Heart right ventricle (tissue), 16 donors: ENCODE measurements at regions of chr15 and their contacts with region 1.

Region 1: DNA sequence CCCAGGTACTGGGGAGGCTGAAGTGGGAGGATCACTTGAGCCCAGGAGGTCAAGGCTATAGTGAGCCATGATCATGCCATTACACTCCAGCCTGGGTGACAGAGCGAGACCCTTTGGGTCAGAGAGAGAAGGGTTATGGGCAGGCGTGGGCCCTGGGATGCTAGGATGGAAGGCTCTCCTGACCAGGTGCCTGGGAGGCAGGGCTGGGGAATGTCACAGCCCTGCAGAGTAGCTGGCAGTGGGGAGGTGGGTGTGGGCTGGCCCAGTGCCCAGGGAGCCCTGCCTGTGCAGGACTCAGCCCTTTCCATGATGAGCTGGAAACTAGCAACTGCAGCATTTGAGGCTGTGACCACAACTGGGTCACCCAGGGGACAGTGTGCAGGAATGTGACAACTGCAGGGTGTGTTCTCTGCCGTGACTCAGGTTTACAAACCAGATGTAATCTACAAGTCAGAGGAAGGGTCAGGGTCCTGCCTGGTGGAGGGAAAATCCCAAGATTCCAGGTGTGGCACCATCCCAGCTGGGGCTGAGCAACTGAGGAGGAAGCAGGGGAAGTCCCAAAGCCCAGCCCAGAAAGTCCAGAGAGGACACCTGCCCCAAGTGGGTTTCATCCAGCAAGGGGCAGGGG is 45.4 kb downstream of the SLC28A1 start:
- DNase-seq: no peak
- ATAC-seq: no peak
- H3K4me3 ChIP-seq: no peak overlapping the region
- H3K27ac ChIP-seq: no peak overlapping the region
- H3K4me1 ChIP-seq: peaks cover 0 to 19% (median 12%) of the 10 kb centered on the region in 9 donors
- H3K27me3 ChIP-seq: no peaks in the 10 kb centered on the region
- CTCF ChIP-seq: no peak

Region 2: DNA sequence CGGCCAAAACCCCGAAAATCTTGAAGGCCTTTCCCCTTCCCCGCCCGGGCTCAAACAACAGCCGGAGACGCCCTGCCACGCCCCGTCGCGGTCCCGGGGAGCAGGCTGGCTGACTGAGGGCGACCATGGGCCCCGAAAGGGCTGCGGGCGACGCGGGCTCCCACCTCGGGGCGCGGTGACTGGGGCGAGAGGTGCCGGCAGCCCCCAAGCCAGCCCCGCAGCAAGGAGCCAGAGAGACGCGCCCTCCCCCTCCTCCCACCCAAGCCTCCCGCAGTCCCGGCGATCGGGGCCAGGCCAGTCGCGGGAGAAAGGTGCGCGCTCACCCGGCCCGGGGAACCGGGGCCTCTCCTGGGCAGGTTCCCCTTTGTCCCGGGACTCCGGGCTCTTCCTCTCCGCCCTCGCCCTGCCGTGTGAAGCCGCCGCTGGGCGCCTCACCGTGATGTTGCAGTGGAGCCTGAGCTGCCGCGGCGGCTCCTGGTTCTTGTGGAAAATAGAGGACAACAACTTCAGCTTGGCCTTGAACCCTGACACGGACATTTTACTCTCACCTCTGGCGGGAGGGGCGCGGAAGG is 359.6 kb before region 1 on chr15:
- intact Hi-C with region 1: loop called in 1 of 10 experiments (anchors 10 kb)
- DNase-seq: peak; percentile 42 to 70
- ATAC-seq: peak; percentile 66 to 85 (median 78)
- H3K4me3 ChIP-seq: peak overlapping the region; percentile 63 to 95 (median 84)
- H3K27ac ChIP-seq: peak overlapping the region; percentile 88 to 97 (median 94)
- H3K4me1 ChIP-seq: peaks cover 0 to 18% (median 8%) of the 10 kb centered on the region in 9 donors
- H3K27me3 ChIP-seq: no peaks in the 10 kb centered on the region
- CTCF ChIP-seq: no peak

Region 3: DNA sequence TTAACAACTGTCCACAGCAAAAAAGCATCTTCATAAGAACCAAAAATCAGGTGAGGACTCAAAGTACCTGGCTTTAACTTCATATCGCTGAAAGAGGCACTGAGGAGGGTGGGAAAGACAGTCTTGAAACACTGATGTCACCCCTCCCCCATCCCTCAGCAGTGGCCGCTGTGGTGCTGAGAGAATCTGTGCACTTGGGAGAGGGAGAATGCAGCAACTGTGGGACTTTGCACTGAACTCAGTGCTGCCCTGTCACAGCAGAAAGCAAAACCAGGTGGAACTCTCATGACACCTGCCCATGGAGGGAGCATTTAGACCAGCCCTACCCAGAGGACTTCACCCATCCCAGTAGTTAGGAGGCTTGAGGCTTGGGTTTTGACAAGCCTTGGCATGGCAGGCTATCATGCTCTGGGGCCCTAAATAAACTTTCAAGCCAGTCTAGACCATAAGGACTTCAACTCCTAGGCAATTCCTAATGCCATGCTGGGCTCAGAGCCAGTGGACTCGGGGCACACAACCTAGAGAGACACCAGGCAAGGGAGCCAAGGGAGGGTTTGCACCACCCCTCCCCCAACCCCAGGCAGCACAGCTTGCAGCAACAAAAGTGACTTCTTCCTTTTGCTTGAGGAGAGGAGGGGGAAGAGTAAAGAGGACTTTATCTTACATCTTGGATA is 335.1 kb before region 1 on chr15:
- intact Hi-C with region 1: loop called in 9 of 10 experiments (anchors 2 to 10 kb)
- DNase-seq: no peak
- ATAC-seq: no peak
- H3K4me3 ChIP-seq: no peak overlapping the region
- H3K27ac ChIP-seq: no peak overlapping the region
- H3K4me1 ChIP-seq: peaks cover 0 to 37% (median under 1%) of the 10 kb centered on the region in 9 donors
- H3K27me3 ChIP-seq: no peaks in the 10 kb centered on the region
- CTCF ChIP-seq: no peak

Region 4: GRCh38 chr15:84716036-84716799 is 213.6 kb before region 1 on chr15 and contains the start of gene SEC11A:
- intact Hi-C with region 1: loop called in 1 of 10 experiments (anchors 10 kb)
- DNase-seq: peak; percentile 94 to 95
- ATAC-seq: peak; percentile 98 to 99 (median 98)
- H3K4me3 ChIP-seq: peak within 1 kb of the TSS; percentile 68 to 97 (median 88)
- H3K27ac ChIP-seq: peak within 1 kb of the TSS; percentile 89 to 98 (median 96)
- H3K4me1 ChIP-seq: peaks cover 5 to 53% (median 27%) of the 10 kb centered on the region in 9 donors
- H3K27me3 ChIP-seq: no peaks in the 10 kb centered on the region
- CTCF ChIP-seq: peak in 2 of 9 donors; percentile 6 to 8
- total RNA-seq, gene SEC11A: 65.9 to 93.8 (median 75.0) TPM

Region 5: GRCh38 chr15:84840741-84841429 is 89.0 kb before region 1 on chr15:
- intact Hi-C with region 1: loop called in 7 of 10 experiments (anchors 2 to 5 kb)
- DNase-seq: peak; percentile 73 to 85
- ATAC-seq: peak; percentile 81 to 91 (median 84)
- H3K4me3 ChIP-seq: peak overlapping the region in 2 of 10 donors; percentile 7 to 15
- H3K27ac ChIP-seq: peak overlapping the region; percentile 84 to 99 (median 96)
- H3K4me1 ChIP-seq: peaks cover 20 to 85% (median 67%) of the 10 kb centered on the region in 9 donors
- H3K27me3 ChIP-seq: no peaks in the 10 kb centered on the region
- CTCF ChIP-seq: no peak

Region 6: DNA sequence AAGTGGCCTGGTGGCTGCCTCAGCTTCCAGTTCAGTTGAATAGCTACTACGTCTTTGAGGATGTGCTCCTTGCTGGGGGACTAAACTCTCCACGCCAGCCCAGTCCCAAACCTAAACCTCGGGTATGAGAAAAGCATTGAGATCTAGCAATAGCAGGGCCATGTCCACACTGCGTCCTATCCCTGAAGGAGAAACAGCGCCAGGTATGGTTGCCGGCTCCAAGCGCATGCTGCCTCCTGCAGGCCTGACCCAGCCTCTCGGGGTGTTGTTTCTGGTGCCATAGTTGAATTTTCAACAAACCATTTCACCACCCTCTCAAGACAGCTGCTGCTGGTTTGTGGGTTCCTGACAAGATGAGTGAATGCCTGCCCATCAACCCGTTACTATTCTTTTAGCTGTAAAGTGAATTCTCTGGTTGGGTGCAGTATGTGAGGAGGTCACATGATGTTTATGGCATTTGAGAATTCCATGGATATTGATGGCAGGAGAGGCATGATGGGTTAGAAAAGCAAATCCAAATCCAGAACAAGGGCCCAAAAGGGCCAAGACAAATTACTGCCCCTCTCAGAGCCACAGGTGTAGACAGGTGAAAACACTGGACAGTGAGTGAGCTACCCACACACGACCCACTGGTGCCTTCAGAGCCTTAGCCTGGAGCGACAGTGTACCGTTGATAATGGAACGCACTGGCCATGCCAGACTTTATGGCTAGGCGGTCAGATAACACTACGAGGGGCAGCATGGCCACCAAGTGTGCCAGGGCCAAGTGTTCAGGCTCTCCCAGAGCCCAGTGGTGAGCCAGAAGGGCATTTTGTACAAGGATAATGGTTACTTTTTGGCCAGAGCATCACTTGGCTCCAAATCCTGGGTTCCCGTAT is 58.2 kb before region 1 on chr15:
- intact Hi-C with region 1: loop called in 5 of 10 experiments (anchors 2 to 10 kb)
- DNase-seq: no peak
- ATAC-seq: peak in 6 of 8 donors; percentile 4 to 34 (median 18)
- H3K4me3 ChIP-seq: no peak overlapping the region
- H3K27ac ChIP-seq: peak overlapping the region in 1 of 10 donors; percentile 36
- H3K4me1 ChIP-seq: peaks cover 0 to 17% (median 3%) of the 10 kb centered on the region in 9 donors
- H3K27me3 ChIP-seq: no peaks in the 10 kb centered on the region
- CTCF ChIP-seq: no peak